Activated T-helper 1 cell treated with anti-CD3 and anti-CD28 coated beads, Interleukin-12 subunit alpha, Interleukin-12 subunit beta, Interleukin-2, Interleukin-4 antibody, amounts not matched to agents 30 ng/mL and 10 ng/mL and 1 ng/mL, durations not matched to agents 14 hours and 24 hours and 36 hours (primary cell): ENCODE measurements at regions of chr14 and their contacts with region 1.

Region 1: DNA sequence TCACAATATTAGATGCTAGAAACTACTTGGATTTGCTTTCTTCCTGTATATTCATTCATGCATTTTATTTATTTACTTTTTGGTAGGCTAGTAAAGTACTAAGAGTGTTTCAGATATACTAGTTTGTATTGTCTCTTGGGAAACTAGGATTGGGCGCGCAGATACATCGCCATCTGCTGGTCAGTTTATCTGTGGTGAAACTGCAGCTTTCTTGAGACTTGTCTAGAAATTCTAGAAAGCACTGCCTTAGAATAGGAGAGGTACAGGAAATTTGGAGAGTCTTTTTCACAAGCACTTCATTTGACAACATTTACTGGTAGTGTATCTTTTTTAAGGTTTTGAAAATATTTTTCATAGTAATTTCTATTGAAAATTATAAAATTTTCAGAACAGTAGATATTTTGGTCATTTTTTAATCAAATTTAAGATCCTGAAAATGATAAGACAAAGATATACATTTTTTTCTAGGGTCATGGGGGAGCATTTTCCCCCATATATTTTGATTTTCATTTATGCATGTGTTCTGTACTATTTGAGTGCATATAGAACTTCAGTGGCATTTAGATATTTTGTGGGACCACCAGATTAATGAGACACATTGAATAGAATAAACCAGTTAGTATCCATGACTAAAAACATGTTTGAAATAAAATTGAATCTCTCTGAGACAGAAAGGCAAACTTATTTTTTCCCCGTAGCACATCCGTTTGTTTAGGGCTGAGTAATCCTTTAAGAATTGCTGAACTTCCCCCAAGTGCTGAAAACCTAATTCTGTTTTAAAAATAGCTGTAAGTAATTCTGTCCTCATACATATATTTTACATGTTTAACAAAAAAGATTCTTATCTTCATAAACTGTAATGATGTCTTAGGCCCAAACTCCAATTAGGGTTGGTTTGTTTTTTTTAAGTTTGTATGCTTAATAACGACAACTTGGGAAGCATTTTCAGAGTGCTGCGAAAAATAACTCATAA is 44.5 kb downstream of the SLC38A6 start:
- DNase-seq: peak; percentile 45
- H3K4me3 Mint-ChIP-seq: no peak overlapping the region
- H3K27ac Mint-ChIP-seq: no peak overlapping the region
- H3K4me1 Mint-ChIP-seq: no peaks in the 10 kb centered on the region
- H3K27me3 Mint-ChIP-seq: no peaks in the 10 kb centered on the region

Region 2: DNA sequence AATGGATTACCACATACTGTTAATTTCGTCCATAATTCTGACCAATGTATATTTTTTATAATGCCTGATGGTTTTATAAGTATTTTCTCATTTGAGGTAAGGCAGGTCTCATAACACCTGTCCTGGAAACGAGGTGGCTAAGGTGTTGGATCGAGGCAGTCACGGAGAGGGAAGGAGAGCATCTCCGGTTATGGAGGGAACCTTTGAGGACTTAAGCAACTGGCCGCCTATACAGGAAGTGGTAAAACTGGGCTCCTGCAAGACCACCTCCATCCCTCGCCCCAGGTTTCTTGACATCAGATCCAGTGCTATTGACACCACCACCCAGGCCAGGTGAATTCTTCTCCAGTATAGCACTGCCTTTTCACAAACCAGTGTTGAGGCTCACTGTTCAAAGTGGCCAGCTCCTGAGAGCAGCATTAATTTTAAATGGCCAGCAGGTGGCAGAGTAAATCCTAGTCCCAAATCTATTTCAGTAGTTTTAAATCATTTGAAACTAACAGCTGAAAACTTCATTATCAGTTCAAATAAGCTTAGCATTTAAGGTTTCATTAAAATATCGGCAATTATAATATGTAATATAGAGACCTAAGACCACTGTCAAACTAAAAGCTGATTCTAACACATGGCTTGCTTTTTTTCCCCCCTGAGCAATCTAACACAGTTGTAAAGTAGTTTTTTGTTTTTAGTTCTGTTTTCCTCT is 675.7 kb before region 1 on chr14:
- intact Hi-C with region 1: loop called (anchors 10 kb)
- DNase-seq: no peak
- H3K4me3 Mint-ChIP-seq: no peak overlapping the region
- H3K27ac Mint-ChIP-seq: no peak overlapping the region
- H3K4me1 Mint-ChIP-seq: no peaks in the 10 kb centered on the region
- H3K27me3 Mint-ChIP-seq: peaks cover 23% of the 10 kb centered on the region

Region 3: GRCh38 chr14:60622917-60623257 is 402.6 kb before region 1 on chr14:
- intact Hi-C with region 1: loop called (anchors 1 kb)
- DNase-seq: no peak
- H3K4me3 Mint-ChIP-seq: no peak overlapping the region
- H3K27ac Mint-ChIP-seq: no peak overlapping the region
- H3K4me1 Mint-ChIP-seq: no peaks in the 10 kb centered on the region
- H3K27me3 Mint-ChIP-seq: peaks cover 19% of the 10 kb centered on the region

Region 4: GRCh38 chr14:60724137-60724619 is 301.4 kb before region 1 on chr14 and contains the start of gene SIX4:
- intact Hi-C with region 1: loop called (anchors 2 kb)
- DNase-seq: no peak
- H3K4me3 Mint-ChIP-seq: peak within 1 kb of the TSS; percentile 91
- H3K27ac Mint-ChIP-seq: peak within 1 kb of the TSS; percentile 67
- H3K4me1 Mint-ChIP-seq: peaks cover 25% of the 10 kb centered on the region
- H3K27me3 Mint-ChIP-seq: peaks cover 75% of the 10 kb centered on the region
- total RNA-seq, gene SIX4: 0.57 and 1.1 TPM in 2 replicates

Region 5: DNA sequence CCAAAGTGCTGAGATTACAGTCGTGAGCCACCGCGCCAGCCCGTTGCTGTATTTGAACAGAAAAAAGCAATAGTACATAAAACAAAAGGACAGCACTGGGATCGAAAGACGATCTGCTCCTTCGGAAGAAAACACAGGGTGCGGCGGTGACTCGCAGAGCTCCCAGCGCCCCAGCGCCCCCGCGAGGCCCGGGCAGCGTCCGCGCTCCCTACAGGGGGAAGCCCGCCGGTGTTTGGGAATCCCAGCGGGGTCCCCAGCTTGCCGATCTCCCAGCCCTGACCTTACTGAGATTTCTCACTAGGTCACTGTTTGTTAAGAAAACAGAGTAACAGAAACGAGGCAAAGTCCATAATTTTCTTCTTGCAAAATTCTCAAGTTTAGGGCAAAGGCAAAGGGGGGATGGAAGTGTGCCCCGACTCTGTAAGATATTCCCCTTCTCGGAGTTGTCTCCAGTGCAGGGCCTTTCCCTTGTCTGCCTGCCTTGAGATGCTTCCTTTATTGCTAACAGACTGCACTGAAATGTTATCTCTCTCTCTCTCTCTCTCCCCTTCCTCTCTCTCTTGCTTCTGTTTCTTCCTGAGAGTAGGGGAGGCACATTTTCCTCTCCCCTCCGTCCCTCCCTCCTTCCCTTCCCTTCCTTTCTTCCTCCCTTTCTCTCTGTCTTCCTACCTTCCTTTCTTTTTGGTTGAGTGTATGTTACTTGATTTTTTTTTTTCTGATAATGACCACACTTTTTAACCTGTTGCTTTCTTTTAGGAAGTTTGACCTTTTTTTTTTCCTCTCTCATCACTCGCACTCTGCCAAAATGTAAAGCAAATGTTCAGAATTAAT is 163.7 kb after region 1 on chr14:
- intact Hi-C with region 1: loop called (anchors 5 kb)
- DNase-seq: no peak
- H3K4me3 Mint-ChIP-seq: peak overlapping the region; percentile 70
- H3K27ac Mint-ChIP-seq: peak overlapping the region; percentile 15
- H3K4me1 Mint-ChIP-seq: peaks cover 26% of the 10 kb centered on the region
- H3K27me3 Mint-ChIP-seq: peaks cover 23% of the 10 kb centered on the region